ENCODE measurements at regions of chr22 and their contacts with region 1.

Region 1: GRCh38 chr22:39003165-39003638 is 10.9 kb upstream of the APOBEC3C start:
- DNase-seq: peak; percentile 77 to 88 (median 82)
- ATAC-seq: peak; percentile 91 to 93
- H3K4me3 ChIP-seq: no peak overlapping the region
- H3K27ac ChIP-seq: no peak overlapping the region
- H3K4me1 ChIP-seq: no peaks in the 10 kb centered on the region
- H3K27me3 ChIP-seq: no peaks in the 10 kb centered on the region

Region 2: DNA sequence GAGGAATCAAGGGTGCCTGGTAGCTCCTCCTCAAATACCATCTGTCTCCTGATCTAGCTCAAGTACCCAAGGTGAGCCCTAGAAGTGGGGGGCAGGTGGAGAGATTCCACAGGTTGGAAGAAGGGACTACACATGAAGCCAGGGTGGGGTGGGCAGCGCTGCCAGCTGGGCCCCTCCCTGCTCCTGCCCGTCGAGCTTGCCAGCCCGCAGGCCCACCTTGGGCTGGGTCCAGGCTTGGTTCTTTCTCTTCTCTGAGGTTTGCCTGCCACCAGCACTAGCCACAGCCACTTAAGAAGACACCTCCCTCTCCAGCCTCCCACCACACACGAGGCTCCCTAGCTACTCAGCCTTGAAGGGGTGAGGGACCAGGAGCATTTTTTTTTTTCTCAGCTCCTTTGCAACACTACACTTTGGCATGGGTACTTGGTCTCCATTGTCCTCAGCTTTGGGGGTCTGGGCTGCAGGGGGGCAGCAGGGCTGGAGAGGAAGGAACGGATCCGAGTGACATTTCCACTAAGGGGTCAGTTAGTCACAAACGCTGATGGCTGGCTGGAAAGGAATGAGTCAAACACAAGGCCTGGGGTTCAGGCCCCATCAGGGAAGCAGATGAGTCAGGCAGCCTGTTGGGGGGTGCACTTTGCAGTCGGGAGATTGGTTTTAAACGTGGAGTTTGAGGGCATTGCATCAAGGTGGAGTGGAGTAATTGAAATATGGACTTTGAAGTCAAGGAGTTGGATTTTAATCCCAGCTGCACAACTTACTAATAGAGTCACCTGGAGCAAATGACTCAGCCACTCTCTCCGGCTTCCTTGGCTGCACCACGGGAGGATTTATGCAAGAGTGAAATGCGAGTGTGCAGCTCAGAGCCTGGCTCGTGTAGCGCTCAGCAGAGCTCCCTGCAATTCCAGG is 152.0 kb before region 1 on chr22:
- intact Hi-C with region 1: loop called in 1 of 4 experiments (anchors 10 kb)
- DNase-seq: peak in 1 of 3 donors; percentile 37
- ATAC-seq: no peak
- H3K4me3 ChIP-seq: no peak overlapping the region
- H3K27ac ChIP-seq: no peak overlapping the region
- H3K4me1 ChIP-seq: no peaks in the 10 kb centered on the region
- H3K27me3 ChIP-seq: no peaks in the 10 kb centered on the region

Region 3: GRCh38 chr22:38927033-38927781 is 76.0 kb before region 1 on chr22:
- intact Hi-C with region 1: no loop called
- DNase-seq: peak; percentile 70 to 91 (median 91)
- ATAC-seq: peak; percentile 82 to 84
- H3K4me3 ChIP-seq: peak overlapping the region; percentile 29
- H3K27ac ChIP-seq: peak overlapping the region; percentile 34
- H3K4me1 ChIP-seq: no peaks in the 10 kb centered on the region
- H3K27me3 ChIP-seq: no peaks in the 10 kb centered on the region

Region 4: DNA sequence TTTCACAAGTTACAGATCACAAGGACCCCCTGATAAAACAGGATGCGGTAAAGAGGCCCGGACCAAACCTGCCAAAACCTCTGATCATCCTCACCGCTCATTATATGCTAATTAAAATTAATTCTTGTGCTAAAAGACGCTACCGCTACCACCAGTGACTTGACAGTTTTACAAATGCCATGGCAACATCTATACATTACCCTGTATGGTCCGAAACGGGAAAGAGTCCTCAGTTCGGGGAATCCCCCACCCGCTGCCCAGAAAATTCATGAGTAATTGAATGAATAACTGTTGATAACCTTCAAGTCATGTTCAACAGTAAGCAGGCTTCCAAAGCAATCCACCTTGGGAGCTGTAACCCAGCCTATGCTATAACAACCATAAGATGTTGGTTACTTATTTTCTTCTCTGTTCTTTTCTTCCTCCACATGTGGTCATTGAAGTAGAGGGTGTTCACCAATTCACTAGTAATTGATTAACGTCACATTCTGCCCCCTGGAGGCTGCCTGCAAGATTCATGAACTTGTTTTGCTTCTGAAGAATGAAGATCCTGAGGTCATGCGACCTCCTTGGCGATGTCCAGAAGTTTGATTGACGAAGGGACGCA is 114.5 kb after region 1 on chr22:
- intact Hi-C with region 1: loop called in 3 of 4 experiments (anchors 10 kb)
- DNase-seq: peak in 1 of 3 donors; percentile 76
- ATAC-seq: peak in 1 of 2 donors; percentile 29
- H3K4me3 ChIP-seq: no peak overlapping the region
- H3K27ac ChIP-seq: no peak overlapping the region
- H3K4me1 ChIP-seq: no peaks in the 10 kb centered on the region
- H3K27me3 ChIP-seq: no peaks in the 10 kb centered on the region